ENCODE measurements at regions of chr10 and their contacts with region 1.

Region 1: GRCh38 chr10:60208676-60209269 is 180.9 kb downstream of the ANK3 start:
- DNase-seq: no peak
- ATAC-seq: peak in 1 of 2 donors; percentile 35
- H3K4me3 ChIP-seq: no peak overlapping the region
- H3K27ac ChIP-seq: no peak overlapping the region
- H3K4me1 ChIP-seq: no peaks in the 10 kb centered on the region
- H3K27me3 ChIP-seq: no peaks in the 10 kb centered on the region

Region 2: DNA sequence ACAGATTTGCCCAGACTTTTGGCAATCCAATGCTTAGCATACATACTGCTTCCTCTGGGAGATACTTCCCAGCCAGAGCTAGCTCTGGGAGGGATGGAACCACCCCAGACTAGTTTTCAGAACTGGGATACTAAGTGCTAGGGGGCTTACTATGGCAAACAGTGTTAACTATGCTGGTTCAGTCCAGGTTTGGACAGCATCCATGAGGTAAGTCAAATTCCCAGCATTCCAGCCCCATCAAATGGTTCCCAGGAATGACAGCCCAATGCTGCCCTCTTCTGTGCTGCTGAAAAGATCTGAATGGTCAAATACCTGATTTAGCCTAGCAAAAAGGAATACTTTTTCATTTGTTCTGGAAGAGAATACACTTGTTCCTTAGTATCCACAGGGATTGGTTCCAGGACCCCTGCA is 160.7 kb before region 1 on chr10:
- intact Hi-C with region 1: no loop called
- DNase-seq: no peak
- ATAC-seq: no peak
- H3K4me3 ChIP-seq: no peak overlapping the region
- H3K27ac ChIP-seq: no peak overlapping the region
- H3K4me1 ChIP-seq: no peaks in the 10 kb centered on the region
- H3K27me3 ChIP-seq: no peaks in the 10 kb centered on the region

Region 3: DNA sequence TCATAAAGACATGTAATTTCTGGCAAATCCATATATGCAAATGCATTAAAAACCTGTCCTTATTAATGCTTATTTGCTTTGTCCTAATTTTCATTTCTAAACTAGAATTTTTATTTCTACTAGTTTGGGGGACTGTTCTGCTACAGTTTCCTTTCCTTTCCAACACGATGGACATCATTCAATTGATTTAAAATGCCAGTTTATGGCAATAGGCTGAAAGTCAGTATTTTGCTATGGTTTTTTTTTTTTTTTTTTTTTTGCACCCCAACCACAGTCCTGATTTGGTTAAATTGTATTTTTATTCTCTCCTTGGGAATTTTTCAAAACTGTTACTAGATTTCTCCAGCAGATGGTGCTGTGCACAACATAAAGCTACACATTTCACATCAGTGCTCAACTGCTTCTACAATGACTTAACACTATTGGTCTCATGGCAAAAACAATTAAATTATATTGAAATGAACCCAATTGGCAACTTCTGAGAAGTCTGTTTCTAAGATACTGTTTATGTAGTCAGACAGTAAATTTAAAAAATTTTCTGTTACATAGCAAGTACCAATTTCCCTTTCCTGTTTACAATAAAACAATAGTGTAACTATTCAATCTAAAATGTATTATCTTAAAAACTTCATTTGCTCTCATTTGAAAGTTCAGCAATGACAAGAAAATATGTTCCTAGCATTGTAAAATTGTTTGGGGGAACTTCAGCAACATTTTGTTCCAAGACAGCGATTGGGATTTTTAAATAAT is 108.6 kb before region 1 on chr10:
- intact Hi-C with region 1: loop called (anchors 5 to 10 kb)
- DNase-seq: no peak
- ATAC-seq: peak; percentile 55 to 66
- H3K4me3 ChIP-seq: no peak overlapping the region
- H3K27ac ChIP-seq: no peak overlapping the region
- H3K4me1 ChIP-seq: no peaks in the 10 kb centered on the region
- H3K27me3 ChIP-seq: no peaks in the 10 kb centered on the region

Region 4: DNA sequence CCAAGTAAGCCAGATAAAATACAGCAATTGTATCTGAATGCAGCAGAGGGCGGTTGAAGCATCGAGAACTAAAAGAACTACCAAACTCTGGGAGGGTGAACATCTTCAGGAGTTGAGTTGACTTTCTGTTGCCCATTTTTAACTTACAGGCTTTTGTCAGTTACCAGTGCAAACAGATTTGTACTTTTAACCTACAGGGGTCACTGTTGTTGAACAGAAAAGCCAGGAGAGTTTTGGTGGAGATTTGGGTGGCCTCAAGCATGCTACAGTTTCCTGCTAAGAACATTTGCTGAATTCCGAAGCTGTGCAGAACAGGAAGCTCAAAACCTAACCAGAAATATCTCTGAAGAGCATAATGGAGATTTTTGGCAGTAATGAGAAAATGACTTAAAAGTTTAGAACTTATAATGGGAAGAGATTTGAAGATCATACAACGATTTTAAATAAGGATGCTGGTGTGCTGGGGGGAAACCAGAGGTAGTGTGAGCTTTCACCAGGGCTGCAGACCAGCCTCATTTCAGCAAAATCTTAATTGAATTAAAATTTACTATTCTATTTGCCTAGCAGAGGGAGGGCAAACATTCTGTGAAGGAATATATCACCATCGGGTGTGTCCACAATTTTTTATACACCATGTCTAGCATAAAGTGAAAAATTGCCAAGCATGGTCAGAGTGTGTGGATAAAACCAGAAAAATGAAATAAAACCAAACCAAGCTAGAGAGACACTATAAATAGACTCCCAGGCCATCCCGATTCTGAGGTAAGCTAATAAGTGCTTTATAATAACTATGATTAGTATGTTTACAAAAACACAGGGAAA is 93.8 kb before region 1 on chr10:
- intact Hi-C with region 1: loop called in 1 of 4 experiments (anchors 5 kb)
- DNase-seq: no peak
- ATAC-seq: peak; percentile 53 to 75
- H3K4me3 ChIP-seq: no peak overlapping the region
- H3K27ac ChIP-seq: no peak overlapping the region
- H3K4me1 ChIP-seq: no peaks in the 10 kb centered on the region
- H3K27me3 ChIP-seq: no peaks in the 10 kb centered on the region

Region 5: DNA sequence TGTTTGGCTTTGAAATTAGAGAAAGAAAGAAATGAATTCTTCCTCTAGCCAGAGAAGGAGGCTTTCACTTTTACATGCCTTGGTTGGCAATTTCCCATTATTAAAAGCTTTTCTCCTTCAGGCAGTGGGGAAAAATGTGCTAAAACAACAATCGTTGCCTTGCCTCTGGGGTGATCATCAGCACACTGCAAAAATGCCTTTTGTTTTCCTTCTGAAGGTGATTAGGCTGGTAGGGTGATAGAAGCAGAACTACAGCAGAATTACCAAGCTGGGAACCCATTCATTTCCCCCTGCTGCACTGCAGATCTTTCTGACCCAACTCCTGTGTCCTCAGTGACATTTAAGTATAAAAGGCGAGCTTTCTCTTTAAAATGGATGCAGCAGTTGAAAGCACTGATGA is 158.7 kb after region 1 on chr10:
- intact Hi-C with region 1: no loop called
- DNase-seq: no peak
- ATAC-seq: no peak
- H3K4me3 ChIP-seq: no peak overlapping the region
- H3K27ac ChIP-seq: no peak overlapping the region
- H3K4me1 ChIP-seq: no peaks in the 10 kb centered on the region
- H3K27me3 ChIP-seq: no peaks in the 10 kb centered on the region